Activated CD8-positive, alpha-beta T cell treated with anti-CD3 and anti-CD28 coated beads for 36 hours (primary cell): ENCODE measurements at regions of chr18 and their contacts with region 1.

Region 1: GRCh38 chr18:54224379-54225014 is at the start of gene MBD2:
- DNase-seq: peak; percentile 96
- ATAC-seq: peak; percentile 93
- H3K4me3 Mint-ChIP-seq: peak within 1 kb of the TSS; percentile 89
- H3K27ac Mint-ChIP-seq: peak within 1 kb of the TSS; percentile 93
- H3K4me1 Mint-ChIP-seq: peaks cover 46% of the 10 kb centered on the region
- H3K27me3 Mint-ChIP-seq: no peaks in the 10 kb centered on the region
- CTCF ChIP-seq: no peak
- total RNA-seq, gene MBD2: 101 to 102 TPM

Region 2: GRCh38 chr18:54209471-54210180 is 14.9 kb before region 1 on chr18:
- CTCF ChIA-PET with region 1: interaction called, 20 read pairs
- POLR2A ChIA-PET with region 1: interaction called, 4 read pairs
- intact Hi-C with region 1: no loop called
- DNase-seq: no peak
- ATAC-seq: peak; percentile 87
- H3K4me3 Mint-ChIP-seq: peak overlapping the region; percentile 34
- H3K27ac Mint-ChIP-seq: peak overlapping the region; percentile 81
- H3K4me1 Mint-ChIP-seq: peaks cover 56% of the 10 kb centered on the region
- H3K27me3 Mint-ChIP-seq: no peaks in the 10 kb centered on the region
- CTCF ChIP-seq: no peak

Region 3: DNA sequence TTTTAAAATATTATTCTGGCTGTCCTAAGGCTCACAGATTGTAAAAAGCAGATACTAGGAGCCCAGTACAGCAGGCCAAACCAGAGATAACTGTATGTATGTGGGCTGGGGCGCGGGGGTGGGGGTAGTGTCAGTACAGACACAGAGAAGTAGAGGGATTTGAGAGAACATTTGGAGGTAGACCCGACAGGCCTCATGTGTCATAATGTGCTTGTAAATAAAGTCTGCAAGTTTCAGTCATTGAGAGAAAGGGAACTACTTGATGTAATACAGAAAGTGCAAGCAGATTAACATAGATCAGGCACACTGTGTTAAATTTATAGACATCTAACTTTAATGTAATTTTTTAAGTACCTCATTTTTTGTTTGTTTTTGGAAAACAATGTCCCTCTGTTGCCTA is 37.4 kb after region 1 on chr18:
- CTCF ChIA-PET with region 1: interaction called, 9 read pairs
- POLR2A ChIA-PET with region 1: interaction called, 7 read pairs
- intact Hi-C with region 1: loop called (anchors 1 kb)
- DNase-seq: peak; percentile 90
- ATAC-seq: peak; percentile 72
- H3K4me3 Mint-ChIP-seq: peak overlapping the region; percentile 16
- H3K27ac Mint-ChIP-seq: peak overlapping the region; percentile 91
- H3K4me1 Mint-ChIP-seq: peaks cover 48% of the 10 kb centered on the region
- H3K27me3 Mint-ChIP-seq: no peaks in the 10 kb centered on the region
- CTCF ChIP-seq: no peak

Region 4: DNA sequence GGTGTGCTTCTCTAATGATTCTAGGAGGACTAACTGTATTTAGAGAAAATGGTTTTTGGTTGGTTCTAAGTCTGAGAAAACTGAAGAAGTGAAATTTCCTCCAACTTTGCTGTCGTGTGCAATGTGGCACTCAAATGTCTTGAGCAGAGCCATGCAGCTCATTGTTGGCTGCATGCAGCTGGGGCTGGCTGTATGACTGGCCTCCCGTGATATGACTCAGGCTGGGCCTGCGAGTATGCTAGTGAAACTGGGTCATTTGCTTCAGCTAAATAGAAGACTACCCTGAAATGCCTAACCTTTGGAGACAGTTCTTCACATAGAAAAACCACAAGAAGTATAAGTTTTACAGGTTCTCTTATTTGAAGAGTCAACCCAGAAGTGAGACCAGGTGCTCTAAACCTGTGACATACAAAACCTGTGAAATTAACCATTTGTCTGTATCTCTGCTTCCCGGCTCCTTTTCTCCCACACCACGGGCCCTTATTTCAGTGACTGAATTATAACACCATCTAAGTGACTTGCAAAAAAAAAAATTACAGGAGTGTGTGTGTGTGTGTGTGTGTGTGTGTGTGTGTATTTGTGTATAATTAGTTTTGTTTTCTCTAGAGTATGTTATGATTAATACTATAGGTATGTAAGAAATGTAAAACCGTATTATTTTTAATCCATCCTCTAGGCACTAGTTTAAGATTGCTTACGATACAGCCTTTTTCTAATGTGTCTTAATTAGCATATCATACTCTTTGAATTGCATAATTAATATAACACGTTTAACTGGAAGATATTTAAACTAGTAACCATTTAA is 60.7 kb after region 1 on chr18:
- CTCF ChIA-PET with region 1: interaction called, 10 read pairs
- POLR2A ChIA-PET with region 1: interaction called, 3 read pairs
- intact Hi-C with region 1: no loop called
- DNase-seq: peak; percentile 92
- ATAC-seq: peak; percentile 97
- H3K4me3 Mint-ChIP-seq: peak overlapping the region; percentile 18
- H3K27ac Mint-ChIP-seq: peak overlapping the region; percentile 86
- H3K4me1 Mint-ChIP-seq: peaks cover 28% of the 10 kb centered on the region
- H3K27me3 Mint-ChIP-seq: no peaks in the 10 kb centered on the region
- CTCF ChIP-seq: no peak

Region 5: GRCh38 chr18:54479365-54479764 is 254.9 kb after region 1 on chr18:
- CTCF ChIA-PET with region 1: no interaction called
- POLR2A ChIA-PET with region 1: no interaction called
- intact Hi-C with region 1: no loop called
- DNase-seq: no peak
- ATAC-seq: no peak
- H3K4me3 Mint-ChIP-seq: no peak overlapping the region
- H3K27ac Mint-ChIP-seq: no peak overlapping the region
- H3K4me1 Mint-ChIP-seq: no peaks in the 10 kb centered on the region
- H3K27me3 Mint-ChIP-seq: peaks cover 10% of the 10 kb centered on the region
- CTCF ChIP-seq: no peak